Left cardiac atrium (tissue), 4 donors: ENCODE measurements at regions of chr9 and their contacts with region 1.

Region 1: GRCh38 chr9:26026423-26027100 is 348.3 kb upstream of the TUSC1 start:
- DNase-seq: no peak
- ATAC-seq: no peak

Region 2: DNA sequence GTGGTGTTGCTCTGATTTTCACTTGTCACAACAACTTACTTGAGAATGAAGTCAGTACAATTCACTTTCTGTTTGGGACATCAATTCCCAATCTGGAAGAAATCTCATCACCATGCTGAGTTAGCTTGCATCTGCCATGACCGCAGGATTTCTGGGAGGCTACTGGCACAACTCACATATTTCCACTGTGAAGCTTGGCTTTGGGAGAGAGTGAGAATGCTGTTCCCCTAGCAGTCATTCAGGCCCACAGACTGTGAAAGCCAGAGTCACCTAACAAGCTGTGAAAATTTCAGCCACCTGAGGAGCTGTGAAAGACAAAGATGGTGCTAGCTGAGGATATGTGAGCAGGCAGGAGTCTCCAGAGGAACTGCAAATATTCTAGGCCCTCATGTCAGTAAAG is 16.9 kb after region 1 on chr9:
- intact Hi-C with region 1: loop called in 1 of 2 experiments (anchors 2 kb)
- DNase-seq: no peak
- ATAC-seq: no peak